Activated CD4-positive, alpha-beta T cell treated with anti-CD3 and anti-CD28 coated beads for 36 hours (primary cell): ENCODE measurements at regions of chr1 and their contacts with region 1.

Region 1: GRCh38 chr1:160681067-160681890 is 30.3 kb downstream of the CD48 start:
- DNase-seq: peak; percentile 96
- ATAC-seq: peak; percentile 76
- H3K4me3 Mint-ChIP-seq: no peak overlapping the region
- H3K27ac Mint-ChIP-seq: peak overlapping the region; percentile 94
- H3K4me1 Mint-ChIP-seq: peaks cover 78% of the 10 kb centered on the region
- H3K27me3 Mint-ChIP-seq: no peaks in the 10 kb centered on the region

Region 2: GRCh38 chr1:160342953-160343869 is 338.1 kb before region 1 on chr1 and contains the starts of genes COPA and NCSTN:
- CTCF ChIA-PET with region 1: no interaction called
- POLR2A ChIA-PET with region 1: no interaction called
- intact Hi-C with region 1: no loop called
- DNase-seq: peak; percentile 94
- ATAC-seq: peak; percentile 99
- H3K4me3 Mint-ChIP-seq: peak within 1 kb of the TSS; percentile 100
- H3K27ac Mint-ChIP-seq: peak within 1 kb of the TSS; percentile 100
- H3K4me1 Mint-ChIP-seq: peaks cover 31% of the 10 kb centered on the region
- H3K27me3 Mint-ChIP-seq: no peaks in the 10 kb centered on the region
- total RNA-seq, gene COPA: 125 to 148 TPM
- total RNA-seq, gene NCSTN: 47.0 to 51.5 TPM

Region 3: DNA sequence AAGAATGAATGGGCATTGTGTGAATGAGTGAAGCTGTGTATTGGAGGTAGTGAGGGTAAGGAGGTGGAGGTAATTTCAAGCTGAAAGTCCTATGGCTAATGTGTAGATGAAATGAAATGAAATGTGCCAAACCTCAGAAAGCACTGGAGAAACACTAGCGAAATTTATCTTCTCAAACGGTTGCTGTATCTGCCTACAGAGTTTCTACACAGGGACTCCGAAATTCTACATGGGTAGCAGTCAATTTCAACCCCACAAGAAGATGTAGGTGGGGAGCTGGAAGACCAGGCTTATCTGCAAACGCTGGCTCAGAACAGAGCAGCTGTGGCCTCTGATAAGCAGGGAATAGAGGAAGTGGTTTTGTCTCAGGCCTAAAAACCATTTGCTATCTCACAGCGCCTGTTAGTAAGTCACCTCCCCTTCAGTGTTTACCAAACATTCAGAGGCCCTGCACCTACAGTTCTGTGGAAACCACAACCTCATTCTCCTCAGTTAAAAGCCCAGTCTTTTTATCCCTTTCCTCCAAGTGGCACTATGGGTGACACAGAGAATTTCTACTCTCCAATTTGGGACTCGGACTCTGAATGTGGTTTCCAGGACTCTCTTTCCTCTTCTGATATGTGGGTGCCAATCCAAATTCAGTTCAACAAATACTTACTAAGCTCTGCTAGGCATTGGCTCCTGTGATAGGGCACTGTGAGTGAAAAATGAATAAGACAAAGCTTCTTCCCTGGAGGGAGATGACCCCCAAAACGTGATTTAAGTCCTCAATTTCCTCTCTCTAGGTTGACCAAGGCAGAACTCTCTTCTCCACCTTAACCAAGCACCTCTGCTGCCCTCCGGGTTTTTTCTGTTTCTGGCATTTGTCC is 141.1 kb before region 1 on chr1:
- CTCF ChIA-PET with region 1: no interaction called
- POLR2A ChIA-PET with region 1: no interaction called
- intact Hi-C with region 1: no loop called
- DNase-seq: peak; percentile 62
- ATAC-seq: peak; percentile 88
- H3K4me3 Mint-ChIP-seq: peak overlapping the region; percentile 47
- H3K27ac Mint-ChIP-seq: peak overlapping the region; percentile 92
- H3K4me1 Mint-ChIP-seq: peaks cover 63% of the 10 kb centered on the region
- H3K27me3 Mint-ChIP-seq: no peaks in the 10 kb centered on the region

Region 4: DNA sequence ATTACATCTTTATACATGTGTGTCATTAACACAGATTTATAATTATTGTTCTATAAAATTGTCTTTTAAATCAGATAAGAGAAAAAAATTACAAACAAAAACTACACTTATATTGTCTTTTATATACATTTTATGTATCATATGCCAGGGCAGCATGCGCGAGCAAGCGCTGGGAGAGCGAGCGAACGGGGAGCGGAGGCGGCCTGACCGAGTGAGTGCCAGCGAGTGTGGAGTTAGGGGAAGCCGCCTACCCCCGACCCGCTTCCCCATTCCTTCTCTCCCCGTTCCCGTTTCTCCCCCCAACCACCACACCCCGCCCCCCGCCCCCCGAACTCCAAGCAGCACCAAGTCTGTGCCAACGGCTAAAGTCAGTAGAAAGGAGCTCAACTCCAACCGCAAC is 11.5 kb before region 1 on chr1:
- CTCF ChIA-PET with region 1: interaction called, 55 read pairs
- POLR2A ChIA-PET with region 1: interaction called, 3 read pairs
- intact Hi-C with region 1: no loop called
- DNase-seq: no peak
- ATAC-seq: no peak
- H3K4me3 Mint-ChIP-seq: no peak overlapping the region
- H3K27ac Mint-ChIP-seq: no peak overlapping the region
- H3K4me1 Mint-ChIP-seq: peaks cover 49% of the 10 kb centered on the region
- H3K27me3 Mint-ChIP-seq: no peaks in the 10 kb centered on the region

Region 5: DNA sequence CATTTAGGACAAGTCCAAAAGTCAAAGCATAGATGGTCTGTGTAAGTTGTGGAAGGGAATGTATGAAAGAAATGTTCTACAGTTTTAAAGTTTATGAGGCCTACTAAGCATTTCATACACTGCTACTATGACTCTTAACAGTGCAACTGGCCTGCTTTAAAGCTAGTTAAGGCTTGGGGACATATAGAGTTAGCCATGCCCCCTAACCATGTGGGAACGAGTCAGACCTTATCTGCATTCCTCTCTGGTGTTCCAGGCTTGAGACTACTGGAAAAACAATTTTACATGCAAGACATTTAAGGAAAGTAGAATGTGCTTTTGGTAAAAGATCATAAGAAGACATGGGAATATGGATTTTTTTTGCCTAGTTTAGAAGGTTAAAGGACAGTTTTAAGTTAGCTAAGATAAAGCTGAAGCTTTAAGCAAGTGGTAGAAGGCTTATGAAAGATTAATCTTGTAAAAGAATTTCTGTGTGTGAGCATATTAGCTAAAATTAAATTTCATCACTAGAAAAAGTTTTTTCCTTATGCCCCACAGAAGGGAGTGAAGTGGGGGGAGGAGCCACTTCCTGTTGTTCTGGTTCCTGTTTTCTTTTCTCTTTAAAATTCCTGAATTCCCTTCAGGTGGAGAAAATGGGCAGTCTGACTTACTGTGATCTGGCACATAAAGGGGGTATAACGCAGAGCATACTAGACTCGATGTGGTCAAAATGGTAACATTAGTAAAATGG is 39.2 kb after region 1 on chr1:
- CTCF ChIA-PET with region 1: interaction called, 42 read pairs
- POLR2A ChIA-PET with region 1: no interaction called
- intact Hi-C with region 1: loop called in 1 of 2 experiments (anchors 2 kb)
- DNase-seq: no peak
- ATAC-seq: no peak
- H3K4me3 Mint-ChIP-seq: no peak overlapping the region
- H3K27ac Mint-ChIP-seq: no peak overlapping the region
- H3K4me1 Mint-ChIP-seq: peaks cover 55% of the 10 kb centered on the region
- H3K27me3 Mint-ChIP-seq: no peaks in the 10 kb centered on the region

Region 6: GRCh38 chr1:160830321-160831153 is 149.3 kb after region 1 on chr1:
- CTCF ChIA-PET with region 1: interaction called, 33 read pairs
- POLR2A ChIA-PET with region 1: no interaction called
- intact Hi-C with region 1: loop called in 1 of 2 experiments (anchors 1 kb)
- DNase-seq: peak; percentile 92
- ATAC-seq: peak; percentile 83
- H3K4me3 Mint-ChIP-seq: no peak overlapping the region
- H3K27ac Mint-ChIP-seq: peak overlapping the region; percentile 44
- H3K4me1 Mint-ChIP-seq: peaks cover 18% of the 10 kb centered on the region
- H3K27me3 Mint-ChIP-seq: no peaks in the 10 kb centered on the region

Region 7: DNA sequence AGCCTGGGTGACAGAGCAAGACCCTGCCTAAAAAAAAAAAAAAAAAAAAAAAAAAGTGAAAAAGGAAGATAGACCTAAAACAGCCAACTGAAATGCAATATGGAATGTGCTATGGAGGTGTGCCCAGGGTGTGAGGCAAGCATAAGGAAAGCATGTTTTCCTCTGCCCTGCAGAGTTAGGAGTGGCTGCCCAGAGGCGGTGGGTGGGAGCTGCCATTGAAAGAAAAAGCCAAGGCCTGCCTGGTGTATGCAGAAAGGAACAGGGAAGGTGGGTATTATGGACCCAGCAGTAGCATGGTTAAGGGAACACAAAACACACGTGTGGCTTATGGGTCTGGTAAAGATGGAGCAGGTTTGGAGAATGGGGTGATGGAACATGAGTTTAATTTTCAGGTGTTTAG is 172.5 kb after region 1 on chr1:
- CTCF ChIA-PET with region 1: no interaction called
- POLR2A ChIA-PET with region 1: no interaction called
- intact Hi-C with region 1: no loop called
- DNase-seq: no peak
- ATAC-seq: no peak
- H3K4me3 Mint-ChIP-seq: no peak overlapping the region
- H3K27ac Mint-ChIP-seq: no peak overlapping the region
- H3K4me1 Mint-ChIP-seq: no peaks in the 10 kb centered on the region
- H3K27me3 Mint-ChIP-seq: no peaks in the 10 kb centered on the region

Region 8: GRCh38 chr1:160935527-160936258 is 254.4 kb after region 1 on chr1:
- CTCF ChIA-PET with region 1: no interaction called
- POLR2A ChIA-PET with region 1: no interaction called
- intact Hi-C with region 1: no loop called
- DNase-seq: no peak
- ATAC-seq: no peak
- H3K4me3 Mint-ChIP-seq: no peak overlapping the region
- H3K27ac Mint-ChIP-seq: no peak overlapping the region
- H3K4me1 Mint-ChIP-seq: no peaks in the 10 kb centered on the region
- H3K27me3 Mint-ChIP-seq: peaks cover 3% of the 10 kb centered on the region

Region 9: GRCh38 chr1:160951443-160952128 is 270.3 kb after region 1 on chr1:
- CTCF ChIA-PET with region 1: interaction called, 46 read pairs
- POLR2A ChIA-PET with region 1: no interaction called
- intact Hi-C with region 1: loop called (anchors 1 to 2 kb)
- DNase-seq: peak; percentile 85
- ATAC-seq: peak; percentile 89
- H3K4me3 Mint-ChIP-seq: no peak overlapping the region
- H3K27ac Mint-ChIP-seq: no peak overlapping the region
- H3K4me1 Mint-ChIP-seq: peaks cover 3% of the 10 kb centered on the region
- H3K27me3 Mint-ChIP-seq: no peaks in the 10 kb centered on the region